CD4-positive, alpha-beta T cell (primary cell): ENCODE measurements at regions of chr9 and their contacts with region 1.

Region 1: GRCh38 chr9:127869310-127870152 is 7.9 kb downstream of the AK1 start:
- DNase-seq: peak; percentile 52 to 88 (median 71)
- ATAC-seq: peak; percentile 62
- H3K4me3 ChIP-seq: no peak overlapping the region
- H3K4me3 Mint-ChIP-seq: no peak overlapping the region
- H3K27ac ChIP-seq: no peak overlapping the region
- H3K27ac Mint-ChIP-seq: no peak overlapping the region
- H3K4me1 ChIP-seq: peaks cover 23% of the 10 kb centered on the region
- H3K4me1 Mint-ChIP-seq: peaks cover 19% of the 10 kb centered on the region
- H3K27me3 ChIP-seq: no peaks in the 10 kb centered on the region
- H3K27me3 Mint-ChIP-seq: no peaks in the 10 kb centered on the region
- CTCF ChIP-seq: peak; percentile 99

Region 2: GRCh38 chr9:127503947-127504782 is 365.4 kb before region 1 on chr9:
- CTCF ChIA-PET with region 1: no interaction called
- POLR2A ChIA-PET with region 1: no interaction called
- intact Hi-C with region 1: loop called in 1 of 2 experiments (anchors 2 kb)
- DNase-seq: peak; percentile 70 to 89 (median 78)
- ATAC-seq: peak; percentile 93
- H3K4me3 ChIP-seq: no peak overlapping the region
- H3K4me3 Mint-ChIP-seq: no peak overlapping the region
- H3K27ac ChIP-seq: no peak overlapping the region
- H3K27ac Mint-ChIP-seq: no peak overlapping the region
- H3K4me1 ChIP-seq: peaks cover 3% of the 10 kb centered on the region
- H3K4me1 Mint-ChIP-seq: peaks cover 4% of the 10 kb centered on the region
- H3K27me3 ChIP-seq: no peaks in the 10 kb centered on the region
- H3K27me3 Mint-ChIP-seq: no peaks in the 10 kb centered on the region
- CTCF ChIP-seq: peak; percentile 88

Region 3: DNA sequence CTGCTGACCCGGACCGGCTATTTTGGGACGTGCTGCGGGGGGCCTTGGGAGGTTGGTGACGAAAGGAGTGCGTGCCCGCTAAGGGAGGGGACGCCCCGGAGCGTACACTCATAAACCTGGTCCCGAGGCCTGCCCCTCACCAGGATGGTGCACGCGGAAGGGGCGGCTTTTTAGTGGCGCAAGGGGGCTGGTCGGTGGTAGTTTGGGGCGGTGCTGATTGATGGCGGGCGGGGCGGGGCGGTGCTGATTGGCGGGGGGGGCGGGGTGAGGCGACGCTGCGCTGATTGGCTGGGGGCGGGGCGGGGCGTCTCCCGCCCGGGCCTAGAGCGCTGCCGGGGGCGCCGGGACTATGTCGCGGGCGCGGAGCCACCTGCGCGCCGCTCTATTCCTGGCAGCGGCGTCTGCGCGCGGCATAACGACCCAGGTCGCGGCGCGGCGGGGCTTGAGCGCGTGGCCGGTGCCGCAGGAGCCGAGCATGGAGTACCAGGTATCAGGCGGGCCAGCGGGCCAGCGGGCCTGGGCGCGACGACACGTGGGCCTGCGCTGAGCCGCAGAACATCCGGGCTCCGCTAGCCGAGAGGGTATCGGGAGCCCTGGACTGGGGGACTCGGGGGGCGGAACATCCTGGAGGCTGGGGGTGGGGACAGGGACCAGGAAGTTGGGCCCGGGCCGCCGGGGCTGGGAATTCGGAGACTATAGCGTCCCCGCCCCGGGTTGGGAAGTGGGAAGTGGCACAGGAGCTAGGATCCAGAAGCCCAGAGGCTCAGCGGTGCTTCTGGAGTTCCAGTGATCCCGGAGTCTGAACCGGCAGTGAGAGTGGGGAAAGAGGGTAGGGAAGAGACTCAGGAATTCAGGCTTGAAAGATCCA is 66.7 kb before region 1 on chr9 and contains the start of gene FPGS:
- CTCF ChIA-PET with region 1: interaction called, 3 read pairs
- POLR2A ChIA-PET with region 1: interaction called, 3 read pairs
- intact Hi-C with region 1: loop called in 1 of 2 experiments (anchors 5 kb)
- DNase-seq: peak; percentile 63 to 94 (median 79)
- ATAC-seq: peak; percentile 90
- H3K4me3 ChIP-seq: peak within 1 kb of the TSS; percentile 79
- H3K4me3 Mint-ChIP-seq: peak within 1 kb of the TSS; percentile 91
- H3K27ac ChIP-seq: peak within 1 kb of the TSS; percentile 79
- H3K27ac Mint-ChIP-seq: peak within 1 kb of the TSS; percentile 80
- H3K4me1 ChIP-seq: peaks cover 29% of the 10 kb centered on the region
- H3K4me1 Mint-ChIP-seq: peaks cover 20% of the 10 kb centered on the region
- H3K27me3 ChIP-seq: no peaks in the 10 kb centered on the region
- H3K27me3 Mint-ChIP-seq: no peaks in the 10 kb centered on the region
- CTCF ChIP-seq: no peak
- total RNA-seq, gene FPGS: 58.0 to 66.6 TPM